Activated CD4-positive, alpha-beta memory T cell treated with anti-CD3 and anti-CD28 coated beads for 36 hours (primary cell): ENCODE measurements at regions of chr16 and their contacts with region 1.

Region 1: GRCh38 chr16:2752035-2752849 is at the start of gene SRRM2:
- DNase-seq: peak; percentile 97
- H3K4me3 Mint-ChIP-seq: peak within 1 kb of the TSS; percentile 96
- H3K27ac Mint-ChIP-seq: peak within 1 kb of the TSS; percentile 99
- H3K4me1 Mint-ChIP-seq: peaks cover 45% of the 10 kb centered on the region
- H3K27me3 Mint-ChIP-seq: no peaks in the 10 kb centered on the region
- total RNA-seq, gene SRRM2: 483 to 526 TPM

Region 2: GRCh38 chr16:2682209-2683021 is 69.8 kb before region 1 on chr16 and contains the start of gene KCTD5:
- CTCF ChIA-PET with region 1: no interaction called
- POLR2A ChIA-PET with region 1: no interaction called
- intact Hi-C with region 1: no loop called
- DNase-seq: peak; percentile 98
- H3K4me3 Mint-ChIP-seq: peak within 1 kb of the TSS; percentile 94
- H3K27ac Mint-ChIP-seq: peak within 1 kb of the TSS; percentile 93
- H3K4me1 Mint-ChIP-seq: peaks cover 28% of the 10 kb centered on the region
- H3K27me3 Mint-ChIP-seq: no peaks in the 10 kb centered on the region
- total RNA-seq, gene KCTD5: 61.8 to 62.7 TPM

Region 3: DNA sequence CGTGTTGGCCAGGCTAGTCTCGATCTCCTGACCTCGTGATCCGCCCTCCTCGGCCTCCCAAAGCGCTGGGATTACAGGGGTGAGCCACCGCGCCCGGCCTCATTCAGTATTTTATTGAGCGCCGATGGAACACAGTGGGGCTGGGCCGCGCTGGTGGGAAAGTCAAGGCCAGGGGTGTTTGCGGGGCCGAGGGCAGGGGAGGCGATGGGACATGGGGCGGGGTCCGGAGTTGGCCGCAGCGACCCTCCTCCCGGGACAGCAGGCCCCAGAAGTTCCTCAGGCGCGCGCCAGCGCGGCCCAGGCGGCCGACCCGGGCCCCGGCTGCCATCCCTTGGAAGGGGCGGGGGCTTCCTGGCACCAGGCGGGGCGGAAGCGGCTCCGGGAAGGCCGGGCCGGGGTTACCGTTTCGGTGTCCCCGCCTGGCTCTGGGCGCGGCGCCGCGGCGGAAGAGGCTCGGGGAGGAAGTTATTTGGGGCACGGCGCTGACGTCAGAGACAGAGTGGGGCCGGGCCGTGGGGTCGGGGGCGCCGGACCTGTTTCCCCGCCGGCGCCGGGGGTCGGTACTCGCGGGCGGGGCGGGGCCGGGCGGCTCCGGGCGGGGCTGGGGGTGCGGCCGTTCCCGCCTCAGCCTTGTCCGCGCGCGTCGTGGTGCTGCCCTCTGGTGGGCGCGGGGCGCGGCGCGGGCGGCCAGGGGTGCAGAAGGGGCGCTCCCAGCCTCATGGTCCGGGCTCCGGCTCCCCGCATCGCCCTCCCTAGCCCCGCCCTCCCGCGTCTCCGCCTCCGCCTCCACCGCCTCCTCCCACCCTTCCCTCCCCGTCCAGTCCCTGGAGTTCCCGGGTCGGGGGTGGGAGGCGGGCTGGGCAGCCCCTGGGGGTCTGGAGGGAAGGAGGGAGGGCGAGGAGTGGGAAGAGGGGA is 31.3 kb before region 1 on chr16:
- CTCF ChIA-PET with region 1: no interaction called
- POLR2A ChIA-PET with region 1: interaction called, 4 read pairs
- intact Hi-C with region 1: loop called (anchors 1 kb)
- DNase-seq: peak; percentile 93
- H3K4me3 Mint-ChIP-seq: peak overlapping the region; percentile 75
- H3K27ac Mint-ChIP-seq: peak overlapping the region; percentile 67
- H3K4me1 Mint-ChIP-seq: peaks cover 2% of the 10 kb centered on the region
- H3K27me3 Mint-ChIP-seq: peaks cover 4% of the 10 kb centered on the region

Region 4: DNA sequence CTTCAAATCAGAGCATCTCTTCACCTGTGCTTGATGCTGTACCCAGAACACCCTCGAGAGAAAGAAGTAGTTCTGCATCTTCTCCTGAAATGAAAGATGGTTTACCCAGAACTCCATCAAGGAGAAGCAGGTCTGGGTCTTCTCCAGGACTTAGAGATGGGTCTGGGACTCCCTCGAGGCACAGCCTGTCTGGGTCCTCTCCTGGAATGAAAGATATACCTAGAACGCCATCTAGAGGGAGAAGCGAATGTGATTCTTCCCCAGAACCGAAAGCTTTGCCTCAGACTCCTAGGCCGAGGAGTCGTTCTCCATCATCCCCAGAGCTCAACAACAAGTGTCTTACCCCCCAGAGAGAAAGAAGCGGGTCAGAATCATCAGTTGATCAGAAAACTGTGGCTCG is 12.5 kb after region 1 on chr16:
- CTCF ChIA-PET with region 1: interaction called, 3 read pairs
- POLR2A ChIA-PET with region 1: interaction called, 11 read pairs
- intact Hi-C with region 1: no loop called
- DNase-seq: no peak
- H3K4me3 Mint-ChIP-seq: no peak overlapping the region
- H3K27ac Mint-ChIP-seq: no peak overlapping the region
- H3K4me1 Mint-ChIP-seq: peaks cover 9% of the 10 kb centered on the region
- H3K27me3 Mint-ChIP-seq: no peaks in the 10 kb centered on the region

Region 5: DNA sequence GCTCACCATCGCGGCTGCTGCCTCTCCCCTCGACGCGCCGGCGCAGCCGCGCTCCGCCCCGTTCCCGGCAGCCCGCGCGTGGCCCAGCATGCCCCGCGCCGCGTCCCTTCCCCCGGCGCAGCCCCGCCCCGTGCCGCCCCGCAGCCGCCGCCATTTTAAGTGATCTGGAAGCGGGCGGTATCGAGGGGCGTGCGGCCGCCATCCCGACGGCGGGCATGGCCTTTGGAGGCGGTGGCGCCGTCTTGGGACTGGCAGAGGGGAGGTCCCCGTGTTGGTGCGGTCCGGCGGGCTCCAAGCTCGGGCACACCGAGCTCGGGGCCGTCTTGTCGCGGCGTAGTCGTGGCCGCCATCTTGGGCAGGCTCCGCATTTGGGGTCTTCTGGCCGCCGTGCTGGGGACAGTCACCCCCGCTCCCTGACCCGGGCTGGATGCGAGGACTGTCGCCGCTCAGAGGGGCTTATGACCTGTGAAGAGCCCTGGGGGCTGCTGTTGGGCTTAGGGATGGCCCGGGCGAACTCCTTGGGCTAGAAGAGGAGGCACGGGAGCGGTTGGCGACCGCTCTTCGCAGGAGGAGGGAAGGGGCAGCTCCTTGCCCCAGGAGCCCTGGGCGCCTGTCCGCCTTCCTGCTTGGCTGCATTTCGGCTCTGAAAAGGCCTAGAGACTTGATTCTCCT is 25.1 kb after region 1 on chr16 and contains the start of gene ELOB:
- CTCF ChIA-PET with region 1: interaction called, 4 read pairs
- POLR2A ChIA-PET with region 1: interaction called, 19 read pairs
- intact Hi-C with region 1: loop called (anchors 1 kb)
- DNase-seq: peak; percentile 93
- H3K4me3 Mint-ChIP-seq: peak within 1 kb of the TSS; percentile 96
- H3K27ac Mint-ChIP-seq: peak within 1 kb of the TSS; percentile 98
- H3K4me1 Mint-ChIP-seq: peaks cover 31% of the 10 kb centered on the region
- H3K27me3 Mint-ChIP-seq: no peaks in the 10 kb centered on the region
- total RNA-seq, gene ELOB: 165 to 175 TPM